ENCODE measurements at regions of chr19 and their contacts with region 1.

Region 1: DNA sequence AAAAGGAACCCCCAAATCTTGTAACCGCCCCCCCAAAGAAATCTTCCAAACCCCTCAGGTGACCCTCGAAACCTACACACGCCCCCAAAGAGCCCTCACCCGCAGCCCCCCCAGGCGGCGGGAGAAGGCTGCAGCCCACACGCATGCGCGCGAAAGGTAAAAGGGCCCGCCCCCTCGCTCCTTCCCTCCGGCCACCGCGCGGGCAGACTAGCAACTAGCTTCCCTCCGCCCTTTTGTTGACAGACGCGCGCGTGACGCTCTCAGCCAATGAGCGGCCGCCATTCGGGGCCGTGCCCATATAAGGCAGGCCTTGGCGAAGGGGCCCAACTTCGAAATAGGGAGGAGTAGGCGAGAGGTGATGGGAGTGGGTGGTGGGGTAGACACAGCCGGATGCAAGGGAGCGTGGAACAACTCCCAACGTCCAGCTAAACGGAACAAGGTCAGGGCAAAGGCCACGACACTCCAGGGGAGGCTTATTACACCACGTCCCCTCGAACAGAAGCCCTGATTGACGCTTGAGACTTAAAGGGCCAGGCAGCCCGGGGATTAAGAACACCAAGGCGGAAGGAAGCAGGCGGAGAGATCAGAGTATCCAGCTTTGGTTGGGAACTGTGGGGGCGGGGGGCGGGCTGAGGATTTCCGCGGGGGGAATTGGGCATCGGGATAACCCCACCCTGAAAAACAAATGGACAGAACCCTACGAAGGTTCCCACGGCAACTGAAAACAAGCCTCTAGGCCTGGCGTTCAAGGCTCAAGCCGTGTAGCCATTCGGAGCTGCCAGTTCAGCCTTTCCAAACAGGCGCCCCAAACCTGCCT is 13.3 kb downstream of the FBXO46 start:
- DNase-seq: peak; percentile 92 to 99 (median 96)
- ATAC-seq: peak; percentile 95
- H3K4me3 ChIP-seq: peak overlapping the region; percentile 78
- H3K4me3 Mint-ChIP-seq: peak overlapping the region; percentile 90
- H3K27ac ChIP-seq: peak overlapping the region; percentile 80 to 96
- H3K27ac Mint-ChIP-seq: peak overlapping the region; percentile 89
- H3K4me1 ChIP-seq: peaks cover 28% of the 10 kb centered on the region
- H3K4me1 Mint-ChIP-seq: peaks cover 42% of the 10 kb centered on the region
- H3K27me3 ChIP-seq: no peaks in the 10 kb centered on the region
- H3K27me3 Mint-ChIP-seq: no peaks in the 10 kb centered on the region
- CTCF ChIP-seq: no peak

Region 2: GRCh38 chr19:45506246-45506990 is 211.0 kb before region 1 on chr19:
- CTCF ChIA-PET with region 1: no interaction called
- POLR2A ChIA-PET with region 1: no interaction called
- intact Hi-C with region 1: loop called in 1 of 2 experiments (anchors 1 kb)
- DNase-seq: peak; percentile 95 to 100 (median 97)
- ATAC-seq: peak; percentile 76
- H3K4me3 ChIP-seq: peak overlapping the region; percentile 89
- H3K4me3 Mint-ChIP-seq: peak overlapping the region; percentile 99
- H3K27ac ChIP-seq: peak overlapping the region; percentile 94 to 95
- H3K27ac Mint-ChIP-seq: peak overlapping the region; percentile 99
- H3K4me1 ChIP-seq: peaks cover 47% of the 10 kb centered on the region
- H3K4me1 Mint-ChIP-seq: peaks cover 47% of the 10 kb centered on the region
- H3K27me3 ChIP-seq: no peaks in the 10 kb centered on the region
- H3K27me3 Mint-ChIP-seq: no peaks in the 10 kb centered on the region
- CTCF ChIP-seq: peak; percentile 63

Region 3: DNA sequence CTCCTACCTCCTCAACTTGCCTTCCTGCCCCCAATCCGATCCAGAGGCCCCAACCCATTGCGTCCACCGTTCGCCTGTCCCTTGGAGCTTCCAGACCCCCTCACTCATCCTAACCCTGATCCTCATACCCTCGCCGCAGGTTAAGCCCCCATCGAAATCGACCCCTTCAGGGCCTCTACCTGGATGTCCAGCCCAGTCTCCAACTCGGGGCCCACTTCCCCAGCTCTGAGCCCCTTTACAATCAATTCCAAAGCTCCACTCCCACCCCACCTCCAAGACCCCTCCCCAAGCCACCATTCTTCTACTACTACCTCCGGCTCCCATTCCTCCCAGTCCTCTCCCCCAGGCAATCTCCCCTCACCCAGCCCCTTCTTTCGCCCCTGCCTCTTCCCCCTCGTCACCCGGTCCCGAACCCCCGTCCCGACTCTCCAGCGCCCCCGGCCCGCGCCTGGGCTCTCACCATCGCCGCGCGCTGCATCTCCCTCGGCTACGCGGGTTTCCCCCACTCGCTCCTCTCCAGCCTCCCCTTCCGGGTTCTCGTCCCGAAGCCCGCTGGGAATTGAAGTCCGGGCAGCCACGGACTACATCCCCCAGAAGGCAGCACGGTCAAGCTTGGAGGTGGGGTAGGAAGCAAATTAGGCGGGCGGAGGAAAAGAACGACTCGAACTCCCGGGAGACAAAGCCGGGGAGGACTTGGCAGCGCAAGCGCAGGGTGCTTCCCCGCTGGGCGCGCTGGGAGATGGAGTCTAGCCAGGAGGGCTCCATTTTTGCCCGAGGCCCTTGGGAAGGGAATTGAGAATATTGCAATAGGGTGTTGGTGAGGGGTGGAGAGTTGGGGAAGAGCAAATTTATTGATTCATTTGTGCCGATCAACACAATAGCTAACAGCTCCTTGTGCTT is 13.3 kb after region 1 on chr19 and contains the start of gene FBXO46:
- CTCF ChIA-PET with region 1: interaction called, 14 read pairs
- POLR2A ChIA-PET with region 1: interaction called, 56 read pairs
- intact Hi-C with region 1: loop called (anchors 1 kb)
- DNase-seq: peak; percentile 83 to 97 (median 91)
- ATAC-seq: peak; percentile 99
- H3K4me3 ChIP-seq: peak within 1 kb of the TSS; percentile 77
- H3K4me3 Mint-ChIP-seq: peak within 1 kb of the TSS; percentile 97
- H3K27ac ChIP-seq: peak within 1 kb of the TSS; percentile 31 to 49
- H3K27ac Mint-ChIP-seq: peak within 1 kb of the TSS; percentile 83
- H3K4me1 ChIP-seq: peaks cover 37% of the 10 kb centered on the region
- H3K4me1 Mint-ChIP-seq: peaks cover 33% of the 10 kb centered on the region
- H3K27me3 ChIP-seq: no peaks in the 10 kb centered on the region
- H3K27me3 Mint-ChIP-seq: no peaks in the 10 kb centered on the region
- CTCF ChIP-seq: no peak
- total RNA-seq, gene FBXO46: 17.2 to 17.5 TPM

Region 4: DNA sequence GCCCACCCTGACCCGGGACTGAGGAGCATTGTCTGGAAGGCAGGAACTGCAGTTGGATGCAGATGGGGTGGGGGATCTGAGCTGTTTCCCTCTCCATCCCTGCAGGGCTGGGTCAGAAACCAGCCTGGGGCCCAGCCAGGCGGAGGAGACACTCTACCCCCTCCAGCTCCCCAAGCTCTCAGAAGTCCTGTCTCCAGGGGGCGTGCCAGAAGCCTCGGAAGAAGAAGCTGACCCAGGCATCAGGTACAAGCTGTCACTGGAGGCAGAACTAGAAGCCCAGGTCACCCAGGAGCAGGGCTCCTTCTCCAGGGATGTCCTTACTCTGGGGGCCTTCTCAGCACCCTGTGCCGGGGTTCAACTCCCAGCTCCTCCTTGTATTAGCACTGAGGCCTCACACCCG is 36.2 kb after region 1 on chr19:
- CTCF ChIA-PET with region 1: no interaction called
- POLR2A ChIA-PET with region 1: no interaction called
- intact Hi-C with region 1: no loop called
- DNase-seq: no peak
- ATAC-seq: no peak
- H3K4me3 ChIP-seq: no peak overlapping the region
- H3K4me3 Mint-ChIP-seq: no peak overlapping the region
- H3K27ac ChIP-seq: no peak overlapping the region
- H3K27ac Mint-ChIP-seq: no peak overlapping the region
- H3K4me1 ChIP-seq: no peaks in the 10 kb centered on the region
- H3K4me1 Mint-ChIP-seq: no peaks in the 10 kb centered on the region
- H3K27me3 ChIP-seq: no peaks in the 10 kb centered on the region
- H3K27me3 Mint-ChIP-seq: no peaks in the 10 kb centered on the region
- CTCF ChIP-seq: no peak

Region 5: GRCh38 chr19:45862564-45863334 is 145.4 kb after region 1 on chr19 and contains the start of gene SYMPK:
- CTCF ChIA-PET with region 1: no interaction called
- POLR2A ChIA-PET with region 1: interaction called, 4 read pairs
- intact Hi-C with region 1: loop called in 1 of 2 experiments (anchors 5 kb)
- DNase-seq: peak; percentile 96 to 99 (median 98)
- ATAC-seq: peak; percentile 97
- H3K4me3 ChIP-seq: peak within 1 kb of the TSS; percentile 80
- H3K4me3 Mint-ChIP-seq: peak within 1 kb of the TSS; percentile 99
- H3K27ac ChIP-seq: peak within 1 kb of the TSS; percentile 66 to 86
- H3K27ac Mint-ChIP-seq: peak within 1 kb of the TSS; percentile 83
- H3K4me1 ChIP-seq: peaks cover 29% of the 10 kb centered on the region
- H3K4me1 Mint-ChIP-seq: peaks cover 34% of the 10 kb centered on the region
- H3K27me3 ChIP-seq: peaks cover 9 to 13% of the 10 kb centered on the region in 2 experiments
- H3K27me3 Mint-ChIP-seq: peaks cover 29% of the 10 kb centered on the region
- CTCF ChIP-seq: no peak
- total RNA-seq, gene SYMPK: 63.3 to 65.0 TPM

Region 6: GRCh38 chr19:45927565-45928261 is 210.3 kb after region 1 on chr19:
- CTCF ChIA-PET with region 1: no interaction called
- POLR2A ChIA-PET with region 1: no interaction called
- intact Hi-C with region 1: no loop called
- DNase-seq: peak; percentile 78 to 95 (median 84)
- ATAC-seq: peak; percentile 100
- H3K4me3 ChIP-seq: no peak overlapping the region
- H3K4me3 Mint-ChIP-seq: peak overlapping the region; percentile 25
- H3K27ac ChIP-seq: no peak overlapping the region
- H3K27ac Mint-ChIP-seq: no peak overlapping the region
- H3K4me1 ChIP-seq: peaks cover 9% of the 10 kb centered on the region
- H3K4me1 Mint-ChIP-seq: peaks cover 9% of the 10 kb centered on the region
- H3K27me3 ChIP-seq: no peaks in the 10 kb centered on the region
- H3K27me3 Mint-ChIP-seq: peaks cover 22% of the 10 kb centered on the region
- CTCF ChIP-seq: no peak

Region 7: DNA sequence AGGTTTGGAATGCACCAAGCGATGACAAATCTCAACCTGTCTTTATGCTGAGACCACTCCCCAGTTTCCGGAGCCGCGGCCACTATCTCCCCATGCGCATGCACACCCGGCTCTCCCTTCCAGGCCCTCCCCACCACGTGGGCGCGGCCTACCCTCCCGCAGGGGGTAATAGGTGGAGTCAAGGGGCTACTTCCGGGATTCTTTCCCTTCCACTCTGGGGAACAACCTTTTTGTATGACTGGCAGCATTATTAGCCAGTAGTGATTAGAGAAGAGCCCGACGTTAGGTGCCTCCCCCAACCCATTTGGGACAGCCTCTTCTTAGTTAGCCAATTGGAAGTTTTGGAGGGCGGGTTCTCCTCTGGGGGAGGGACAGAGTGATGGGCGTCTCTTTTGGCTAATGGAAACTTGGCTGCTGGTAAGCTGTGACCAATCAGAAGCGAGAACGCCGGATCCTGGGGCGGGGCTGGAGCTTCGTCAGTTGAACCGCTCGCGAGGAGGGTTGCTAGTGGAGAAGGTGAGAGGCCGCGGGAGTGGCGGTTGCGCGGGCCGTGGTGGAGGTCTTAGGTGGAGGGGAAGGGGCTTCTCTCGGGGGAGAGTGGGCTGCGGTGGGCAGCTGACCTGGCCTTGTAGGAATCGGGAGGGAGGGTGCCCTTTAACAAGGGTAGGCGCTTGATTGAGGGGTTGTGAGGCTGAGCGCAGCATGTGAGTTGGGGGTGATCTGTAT is 277.8 kb after region 1 on chr19 and contains the start of gene CCDC61:
- CTCF ChIA-PET with region 1: no interaction called
- POLR2A ChIA-PET with region 1: no interaction called
- intact Hi-C with region 1: loop called in 1 of 2 experiments (anchors 5 kb)
- DNase-seq: peak; percentile 91 to 100 (median 94)
- ATAC-seq: peak; percentile 94
- H3K4me3 ChIP-seq: peak within 1 kb of the TSS; percentile 79
- H3K4me3 Mint-ChIP-seq: no peak within 1 kb of the TSS
- H3K27ac ChIP-seq: peak within 1 kb of the TSS; percentile 49 to 67
- H3K27ac Mint-ChIP-seq: no peak within 1 kb of the TSS
- H3K4me1 ChIP-seq: peaks cover 27% of the 10 kb centered on the region
- H3K4me1 Mint-ChIP-seq: peaks cover 17% of the 10 kb centered on the region
- H3K27me3 ChIP-seq: no peaks in the 10 kb centered on the region
- H3K27me3 Mint-ChIP-seq: peaks cover 5% of the 10 kb centered on the region
- CTCF ChIP-seq: no peak
- total RNA-seq, gene CCDC61: 4.9 to 6.6 TPM

Region 8: GRCh38 chr19:46147791-46148288 is 430.5 kb after region 1 on chr19 and contains the start of gene IGFL2:
- CTCF ChIA-PET with region 1: no interaction called
- POLR2A ChIA-PET with region 1: no interaction called
- intact Hi-C with region 1: no loop called
- DNase-seq: no peak
- ATAC-seq: no peak
- H3K4me3 ChIP-seq: no peak within 1 kb of the TSS
- H3K4me3 Mint-ChIP-seq: no peak within 1 kb of the TSS
- H3K27ac ChIP-seq: no peak within 1 kb of the TSS
- H3K27ac Mint-ChIP-seq: no peak within 1 kb of the TSS
- H3K4me1 ChIP-seq: no peaks in the 10 kb centered on the region
- H3K4me1 Mint-ChIP-seq: no peaks in the 10 kb centered on the region
- H3K27me3 ChIP-seq: peaks cover 5 to 15% of the 10 kb centered on the region in 2 experiments
- H3K27me3 Mint-ChIP-seq: peaks cover 61% of the 10 kb centered on the region
- CTCF ChIP-seq: no peak
- total RNA-seq, gene IGFL2: not detected